Astrocyte of the cerebellum (primary cell): ENCODE measurements at regions of chr12 and their contacts with region 1.

Region 1: GRCh38 chr12:25436203-25437030 is 116.7 kb downstream of the LMNTD1 start:
- DNase-seq: peak; percentile 83
- H3K4me3 ChIP-seq: no peak overlapping the region
- CTCF ChIP-seq: peak; percentile 82

Region 2: DNA sequence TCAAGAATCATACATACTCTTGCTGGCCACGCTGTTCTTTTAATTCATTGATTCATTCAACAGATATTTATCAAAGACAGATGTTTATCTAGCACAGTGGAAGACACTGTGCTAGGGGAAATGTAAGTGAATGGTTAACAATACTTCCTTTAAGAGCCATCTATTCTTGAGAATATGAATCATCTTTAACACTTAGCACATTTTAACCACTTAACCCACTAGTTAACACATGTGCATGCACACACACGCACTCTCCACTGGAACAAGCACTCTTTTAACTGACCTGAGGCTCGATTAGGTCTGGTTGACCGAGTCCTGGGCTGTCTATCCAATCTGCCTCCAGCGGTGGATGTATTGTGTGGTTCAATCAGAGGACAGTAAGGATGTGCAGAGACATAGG is 82.1 kb after region 1 on chr12:
- in situ Hi-C with region 1: no loop called
- DNase-seq: peak; percentile 13
- H3K4me3 ChIP-seq: no peak overlapping the region
- CTCF ChIP-seq: no peak

Region 3: DNA sequence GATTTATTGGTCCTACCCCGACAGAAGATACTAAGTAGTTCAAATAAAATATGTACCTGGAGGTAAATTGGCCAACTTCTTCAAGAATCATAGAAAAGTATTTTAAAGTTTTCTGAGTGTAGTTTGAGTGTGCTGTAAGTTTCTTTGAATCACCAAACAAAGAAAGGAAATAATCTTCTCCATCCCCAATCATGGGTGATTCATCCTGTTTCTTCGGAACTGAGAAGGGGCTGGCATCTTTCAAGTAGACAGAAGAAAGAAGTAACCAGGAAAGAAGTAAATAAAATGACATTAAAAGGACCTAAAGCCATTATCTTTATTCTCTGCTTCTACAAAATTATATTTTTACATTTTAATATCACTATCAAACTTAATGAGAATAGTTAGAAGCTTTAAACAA is 109.9 kb after region 1 on chr12:
- in situ Hi-C with region 1: loop called (anchors 5 kb)
- DNase-seq: no peak
- H3K4me3 ChIP-seq: no peak overlapping the region
- CTCF ChIP-seq: no peak

Region 4: DNA sequence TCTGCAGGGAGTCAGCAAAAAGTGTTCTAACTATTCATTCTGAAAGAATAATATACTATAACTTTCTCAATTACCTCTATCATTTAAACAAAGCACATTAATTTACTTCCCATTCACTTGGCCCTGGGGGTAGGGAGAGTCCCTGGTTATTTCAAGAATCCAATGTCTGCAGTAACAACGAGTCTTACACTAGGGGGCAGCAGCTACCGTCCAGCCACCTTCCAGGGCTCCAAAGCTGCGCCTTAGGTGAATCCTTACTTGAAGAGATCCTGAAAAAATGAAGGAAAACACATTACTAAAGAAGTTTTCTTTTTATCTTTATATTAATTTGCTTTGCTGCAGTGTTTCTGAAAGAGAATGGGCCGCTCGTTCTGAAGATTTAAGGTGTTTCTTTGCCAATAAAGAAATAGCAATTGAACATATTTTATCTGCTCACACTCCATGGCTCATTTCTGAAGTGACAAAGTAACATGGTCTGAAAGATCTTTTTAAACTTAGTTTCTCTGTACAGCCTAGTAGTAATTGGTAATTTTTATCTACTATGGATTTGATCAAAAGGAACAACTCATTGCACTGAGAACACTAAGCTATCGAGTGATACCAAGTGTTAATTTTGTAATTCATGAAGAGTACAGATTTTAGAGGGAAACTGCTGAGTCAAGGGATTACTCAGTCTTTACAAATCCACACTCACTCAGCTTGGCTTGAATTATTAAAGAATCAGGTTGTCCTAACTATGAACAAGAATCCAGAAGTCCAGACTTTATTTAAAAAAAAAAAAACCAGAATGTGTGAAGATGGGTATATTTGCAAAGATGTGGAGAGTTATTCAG is 660.8 kb after region 1 on chr12:
- in situ Hi-C with region 1: loop called (anchors 10 kb)
- DNase-seq: peak; percentile 64
- H3K4me3 ChIP-seq: no peak overlapping the region
- CTCF ChIP-seq: peak; percentile 96